ENCODE measurements at regions of chr1 and their contacts with region 1.

Region 1: DNA sequence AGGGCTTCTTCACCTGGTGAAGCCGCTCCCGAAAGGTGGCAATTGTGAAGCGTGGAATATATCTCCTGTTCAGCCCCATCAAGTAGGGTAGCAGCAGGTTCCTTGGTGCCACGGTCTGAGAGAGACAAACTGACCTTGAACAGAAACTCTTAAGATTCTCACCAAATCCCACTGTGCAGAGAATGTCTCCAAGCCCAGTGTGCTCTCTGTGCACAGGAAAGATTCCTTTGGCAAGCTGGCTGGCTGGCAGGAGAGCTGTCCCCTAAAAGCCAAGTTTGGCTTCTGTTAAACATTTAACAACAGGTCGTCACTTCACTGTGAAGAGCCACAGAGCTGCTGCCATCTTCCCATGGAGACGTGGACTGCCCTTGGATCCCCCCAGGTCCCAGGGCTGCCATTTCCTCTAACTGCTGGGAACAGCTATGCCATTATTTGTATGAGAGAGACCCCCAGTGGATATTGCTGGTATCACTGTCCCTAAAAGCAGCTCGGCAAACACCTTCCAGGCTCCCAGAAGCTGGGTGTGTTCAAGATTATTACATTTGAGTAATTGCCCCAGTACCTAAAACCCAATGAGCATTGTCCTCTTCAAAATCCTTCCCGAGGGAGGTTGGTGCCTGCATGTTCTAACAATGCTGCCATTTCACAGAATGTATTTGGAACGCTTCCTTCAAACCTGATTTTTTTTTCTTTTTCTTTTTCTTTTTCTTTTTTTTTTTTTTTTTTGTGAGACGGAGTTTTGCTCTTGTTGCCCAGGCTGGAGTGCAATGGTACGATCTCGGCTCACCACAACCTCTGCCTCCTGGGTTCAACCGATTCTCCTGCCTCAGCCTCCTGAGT is 71.8 kb downstream of the CD58 start:
- DNase-seq: peak; percentile 55
- ATAC-seq: peak; percentile 95
- H3K4me3 ChIP-seq: no peak overlapping the region
- H3K27ac ChIP-seq: no peak overlapping the region
- H3K4me1 ChIP-seq: peaks cover 6 to 15% of the 10 kb centered on the region in 2 experiments
- H3K27me3 ChIP-seq: no peaks in the 10 kb centered on the region
- CTCF ChIP-seq: peak; percentile 71 to 96 (median 87)
- POLR2A ChIP-seq: no peak
- RAD21 ChIP-seq: peak; percentile 97

Region 2: DNA sequence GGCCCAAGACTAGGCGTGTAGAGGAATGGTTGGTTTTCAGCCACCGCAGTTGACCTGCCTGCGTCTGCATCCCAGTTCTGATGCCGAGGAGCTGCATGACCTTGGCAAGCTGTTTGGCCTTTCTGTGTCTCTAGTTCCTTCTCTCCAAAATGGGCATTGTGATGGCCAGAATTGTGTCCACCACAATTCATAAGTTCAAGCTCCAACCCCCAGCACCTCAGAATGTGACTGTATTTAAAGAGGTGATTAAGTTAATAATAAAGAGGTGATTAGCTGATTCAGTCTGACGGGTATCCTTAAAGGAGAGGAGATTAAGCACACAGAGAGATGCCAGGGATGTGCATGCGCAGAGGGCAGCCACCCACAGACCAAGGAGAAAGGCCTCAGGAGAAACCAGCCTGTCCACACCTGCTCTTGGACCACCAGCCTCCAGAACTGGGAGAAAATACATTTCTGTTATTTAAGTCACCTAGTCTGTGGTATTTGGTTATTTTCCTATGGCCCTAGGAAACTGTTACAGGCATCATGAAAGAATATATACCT is 359.3 kb before region 1 on chr1:
- CTCF ChIA-PET with region 1: interaction called, 251 read pairs
- POLR2A ChIA-PET with region 1: interaction called, 25 read pairs
- RAD21 ChIA-PET with region 1: interaction called, 27 to 53 read pairs
- intact Hi-C with region 1: loop called (anchors 1 kb)
- DNase-seq: no peak
- ATAC-seq: no peak
- H3K4me3 ChIP-seq: no peak overlapping the region
- H3K27ac ChIP-seq: no peak overlapping the region
- H3K4me1 ChIP-seq: peaks cover 2 to 8% of the 10 kb centered on the region in 2 experiments; a peak in 2 of 4 replicates
- H3K27me3 ChIP-seq: no peaks in the 10 kb centered on the region
- CTCF ChIP-seq: no peak
- POLR2A ChIP-seq: no peak
- RAD21 ChIP-seq: no peak

Region 3: DNA sequence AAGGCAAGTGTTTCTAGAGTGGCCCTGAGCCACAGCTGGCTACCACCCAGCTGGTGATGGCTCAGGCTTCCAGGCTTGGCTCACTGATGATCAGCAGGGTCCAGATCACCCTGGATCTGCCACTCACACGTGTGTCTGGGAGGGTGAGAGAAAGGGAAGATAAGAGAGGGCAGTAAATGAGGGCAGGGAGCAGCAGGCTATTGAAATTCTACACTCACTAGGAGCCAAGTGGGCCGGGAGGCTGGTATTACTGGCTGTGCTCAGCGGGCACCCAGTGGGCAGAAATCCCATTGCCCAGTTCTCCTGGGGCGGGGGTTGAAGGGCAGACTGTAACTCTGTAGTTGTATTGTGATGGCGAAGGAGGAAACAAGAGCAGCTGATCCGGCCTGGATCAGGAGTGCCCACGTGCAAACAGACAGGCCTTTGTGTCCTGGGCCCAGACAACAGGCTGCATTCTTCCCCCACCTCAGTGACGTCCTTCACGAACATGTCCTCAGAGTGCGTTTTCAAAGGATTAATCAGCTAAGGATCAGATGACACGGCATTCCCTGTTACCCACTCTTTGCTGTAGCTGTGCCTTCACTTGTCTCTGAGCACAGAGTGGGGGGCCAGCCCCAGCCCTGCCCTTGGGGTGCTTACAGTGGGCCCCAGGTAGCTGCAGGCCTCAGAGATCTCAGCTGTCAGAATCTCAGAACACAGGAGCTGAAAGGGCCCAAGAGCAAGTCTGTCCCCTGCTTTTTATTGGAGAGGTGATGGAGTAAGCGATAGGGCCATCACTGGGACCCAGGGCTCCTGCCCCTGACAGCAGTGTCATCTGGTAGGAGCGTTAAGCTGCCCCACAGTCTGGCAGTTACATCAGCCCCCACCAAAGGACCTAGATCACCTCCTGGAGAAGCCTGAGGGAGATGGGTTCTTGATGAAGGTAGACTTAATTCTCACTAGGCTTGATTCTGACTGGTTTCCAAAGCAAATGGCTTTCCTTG is 65.4 kb before region 1 on chr1:
- CTCF ChIA-PET with region 1: no interaction called
- POLR2A ChIA-PET with region 1: no interaction called
- RAD21 ChIA-PET with region 1: no interaction called
- intact Hi-C with region 1: no loop called
- DNase-seq: no peak
- ATAC-seq: no peak
- H3K4me3 ChIP-seq: no peak overlapping the region
- H3K27ac ChIP-seq: no peak overlapping the region
- H3K4me1 ChIP-seq: no peaks in the 10 kb centered on the region
- H3K27me3 ChIP-seq: no peaks in the 10 kb centered on the region
- CTCF ChIP-seq: no peak
- POLR2A ChIP-seq: no peak
- RAD21 ChIP-seq: no peak